AG04449 (cell line): ENCODE measurements at regions of chr6 and their contacts with region 1.

Region 1: GRCh38 chr6:35247642-35248231 is 11.8 kb upstream of the ZNF76 start:
- DNase-seq: no peak
- H3K4me3 ChIP-seq: no peak overlapping the region
- CTCF ChIP-seq: no peak

Region 2: GRCh38 chr6:35048631-35049083 is 199.1 kb before region 1 on chr6:
- CTCF ChIA-PET with region 1: no interaction called
- POLR2A ChIA-PET with region 1: no interaction called
- DNase-seq: peak; percentile 40
- H3K4me3 ChIP-seq: no peak overlapping the region
- CTCF ChIP-seq: peak; percentile 50

Region 3: DNA sequence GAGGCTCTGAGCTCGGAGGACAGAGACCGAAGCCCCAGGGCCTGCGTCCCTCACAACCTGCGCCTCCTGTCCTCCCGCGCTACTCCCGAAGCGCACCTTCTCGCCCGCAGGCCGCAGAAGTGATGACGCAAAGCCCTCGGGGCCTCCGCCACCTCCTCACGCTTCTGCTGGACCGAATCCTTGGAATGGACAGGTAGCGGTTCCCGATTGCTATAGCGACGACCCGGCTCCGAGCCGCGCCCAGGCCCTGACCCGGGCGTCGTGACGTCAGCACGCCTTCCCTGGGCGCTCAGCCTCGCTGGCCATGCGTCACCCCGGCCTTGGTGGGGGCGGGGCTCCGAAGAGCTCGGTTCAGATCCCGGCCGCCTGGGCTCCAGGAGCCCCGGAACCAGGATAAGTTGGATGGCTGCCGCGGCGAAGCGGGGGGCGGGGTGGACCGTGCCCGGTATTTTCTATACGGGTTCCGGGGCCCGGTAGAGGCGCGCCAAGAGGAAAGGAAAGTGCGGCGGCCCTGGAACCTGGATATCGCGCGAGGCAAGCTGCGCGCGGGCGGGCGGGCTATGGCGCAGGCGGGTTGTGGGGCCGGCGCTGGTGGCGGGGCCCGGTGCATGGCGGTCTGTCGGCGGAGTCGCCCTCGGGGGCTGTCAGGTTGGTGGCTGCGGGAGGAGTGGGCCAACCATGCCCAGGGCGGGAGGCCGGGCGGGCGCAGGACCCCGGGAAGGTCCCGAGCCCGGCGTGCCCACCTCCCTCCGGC is 11.6 kb after region 1 on chr6 and contains the start of gene ZNF76:
- CTCF ChIA-PET with region 1: interaction called, 69 read pairs
- POLR2A ChIA-PET with region 1: interaction called, 4 read pairs
- DNase-seq: peak; percentile 42
- H3K4me3 ChIP-seq: peak within 1 kb of the TSS; percentile 99
- CTCF ChIP-seq: no peak

Region 4: GRCh38 chr6:35489995-35490733 is 242.4 kb after region 1 on chr6:
- CTCF ChIA-PET with region 1: no interaction called
- POLR2A ChIA-PET with region 1: no interaction called
- DNase-seq: no peak
- H3K4me3 ChIP-seq: peak overlapping the region; percentile 36
- CTCF ChIP-seq: no peak